ENCODE measurements at regions of chr12 and their contacts with region 1.

Region 1: DNA sequence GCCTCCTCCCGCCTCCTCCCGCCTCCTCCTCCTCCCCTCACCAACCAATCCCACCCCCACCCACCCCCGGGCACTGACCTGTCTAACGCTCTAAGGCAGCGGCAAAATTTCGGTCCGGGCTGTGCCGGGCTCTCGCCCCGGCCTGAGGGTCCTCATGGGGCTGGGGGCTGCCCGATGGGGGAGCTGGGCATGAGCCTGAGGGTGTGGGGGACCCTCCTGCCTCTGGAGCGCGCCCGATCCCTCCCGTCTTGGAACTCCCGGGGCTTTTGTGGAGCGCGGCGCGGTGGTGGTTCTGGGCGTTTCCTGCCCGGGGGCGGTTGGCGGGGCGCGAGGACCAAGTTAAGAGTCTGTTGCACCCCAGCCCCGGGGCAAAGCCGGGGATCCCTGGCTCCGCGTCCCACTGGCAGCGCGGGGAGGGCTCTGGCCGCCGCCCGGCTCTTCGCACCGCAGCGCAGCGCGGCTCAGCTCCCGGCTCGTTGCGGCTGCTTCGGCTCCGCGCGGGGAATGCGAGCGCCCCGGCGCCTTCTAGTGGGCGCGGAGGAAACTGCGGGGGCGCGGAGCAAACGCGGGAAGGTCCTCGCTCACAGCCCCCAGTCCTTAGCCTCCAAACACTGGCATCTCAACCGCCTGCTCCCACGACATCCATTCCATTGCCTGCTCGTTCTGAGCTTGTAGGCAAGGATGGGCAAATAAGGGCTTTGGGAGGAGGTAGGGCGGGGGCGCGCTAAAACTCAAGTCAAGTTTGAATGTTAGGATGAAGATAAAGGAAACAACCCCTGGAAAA is at the start of gene B4GALNT1:
- DNase-seq: peak; percentile 39 to 72 (median 64)
- ATAC-seq: peak; percentile 83 to 92
- H3K4me3 Mint-ChIP-seq: peak within 1 kb of the TSS; percentile 45 to 84 (median 74)
- H3K27ac Mint-ChIP-seq: peak within 1 kb of the TSS in 1 of 10 donors; percentile 59
- H3K4me1 Mint-ChIP-seq: peaks cover 8 to 24% (median 17%) of the 10 kb centered on the region in 4 donors
- H3K27me3 Mint-ChIP-seq: peaks cover 16 to 70% (median 48%) of the 10 kb centered on the region in 5 donors
- polyA plus RNA-seq, gene B4GALNT1: not detected

Region 2: GRCh38 chr12:57498571-57498970 is 134.3 kb before region 1 on chr12:
- POLR2A ChIA-PET with region 1: interaction called, 10 read pairs
- DNase-seq: no peak
- ATAC-seq: no peak
- H3K4me3 Mint-ChIP-seq: no peak overlapping the region
- H3K27ac Mint-ChIP-seq: peak overlapping the region in 1 of 10 donors; percentile 71
- H3K4me1 Mint-ChIP-seq: peaks cover 0 to 20% (median 12%) of the 10 kb centered on the region in 4 donors
- H3K27me3 Mint-ChIP-seq: no peaks in the 10 kb centered on the region

Region 3: GRCh38 chr12:57604454-57604991 is 28.4 kb before region 1 on chr12 and contains the start of gene DTX3:
- POLR2A ChIA-PET with region 1: no interaction called
- DNase-seq: peak in 8 of 10 donors; percentile 25 to 78 (median 46)
- ATAC-seq: peak; percentile 74 to 81
- H3K4me3 Mint-ChIP-seq: peak within 1 kb of the TSS; percentile 78 to 94 (median 88)
- H3K27ac Mint-ChIP-seq: peak within 1 kb of the TSS; percentile 86 to 97 (median 92)
- H3K4me1 Mint-ChIP-seq: peaks cover 18 to 43% (median 35%) of the 10 kb centered on the region in 4 donors
- H3K27me3 Mint-ChIP-seq: no peaks in the 10 kb centered on the region
- polyA plus RNA-seq, gene DTX3: 4.9 to 9.4 (median 7.7) TPM